Activated T-helper 2 cell treated with anti-CD3 and anti-CD28 coated beads, Interferon-gamma antibody, Interleukin-2, Interleukin-4, amounts not matched to agents 10 μg/mL and 5 μg/mL and 100 μg/mL, durations not matched to agents 14 hours and 24 hours and 36 hours (primary cell): ENCODE measurements at regions of chr3 and their contacts with region 1.

Region 1: GRCh38 chr3:49719214-49719884 is at the start of gene AMIGO3:
- DNase-seq: peak; percentile 90
- H3K4me3 Mint-ChIP-seq: peak within 1 kb of the TSS; percentile 80
- H3K27ac Mint-ChIP-seq: peak within 1 kb of the TSS; percentile 65
- H3K4me1 Mint-ChIP-seq: peaks cover 19% of the 10 kb centered on the region
- H3K27me3 Mint-ChIP-seq: no peaks in the 10 kb centered on the region
- total RNA-seq, gene AMIGO3: not detected in 2 replicates

Region 2: DNA sequence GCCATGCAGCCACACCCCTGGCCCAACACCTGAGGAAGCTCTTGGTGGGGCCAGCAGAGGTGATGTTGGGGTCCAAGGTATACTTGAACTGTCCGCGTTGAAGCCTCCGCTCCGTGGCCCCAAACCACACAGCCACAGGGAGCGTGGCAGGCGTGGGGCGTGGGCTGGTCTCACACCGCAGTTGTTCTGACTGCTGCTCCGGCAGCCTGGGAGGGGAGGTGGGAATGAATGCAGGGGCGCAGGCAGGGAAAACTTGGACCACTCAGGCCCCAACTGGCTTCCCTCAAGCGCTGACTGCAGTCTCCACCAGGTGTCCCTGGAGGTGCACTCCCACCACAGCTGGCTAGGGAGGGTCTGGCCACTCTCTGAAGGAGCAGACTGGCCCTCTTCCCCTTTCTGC is 1303.8 kb before region 1 on chr3:
- intact Hi-C with region 1: no loop called
- DNase-seq: no peak
- H3K4me3 Mint-ChIP-seq: no peak overlapping the region
- H3K27ac Mint-ChIP-seq: no peak overlapping the region
- H3K4me1 Mint-ChIP-seq: no peaks in the 10 kb centered on the region
- H3K27me3 Mint-ChIP-seq: no peaks in the 10 kb centered on the region

Region 3: DNA sequence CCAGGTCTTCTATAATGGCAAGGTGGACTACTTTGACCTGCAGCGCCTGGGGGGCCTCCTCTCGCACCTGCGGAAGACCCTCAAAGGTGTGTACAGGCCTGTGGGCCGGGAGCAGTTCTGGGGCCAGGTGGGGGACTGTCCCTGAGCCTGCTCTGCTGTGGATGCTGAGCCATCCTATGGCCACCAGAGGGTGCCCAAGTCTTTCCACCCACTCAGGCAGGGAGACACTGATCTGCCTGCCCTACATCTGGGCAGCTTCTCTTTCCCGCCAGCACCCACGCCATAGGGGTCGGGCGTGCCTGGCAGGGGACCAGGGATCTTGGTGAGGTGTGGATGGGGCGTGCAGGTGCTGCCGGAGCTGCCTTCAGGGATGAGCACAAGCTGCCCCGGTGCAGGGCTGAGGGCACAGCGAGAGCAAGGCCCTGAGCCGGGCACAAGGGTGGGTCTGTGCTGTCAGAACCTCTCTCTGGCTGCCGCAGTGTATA is 15.9 kb before region 1 on chr3:
- intact Hi-C with region 1: loop called (anchors 2 kb)
- DNase-seq: peak; percentile 56
- H3K4me3 Mint-ChIP-seq: no peak overlapping the region
- H3K27ac Mint-ChIP-seq: no peak overlapping the region
- H3K4me1 Mint-ChIP-seq: no peaks in the 10 kb centered on the region
- H3K27me3 Mint-ChIP-seq: no peaks in the 10 kb centered on the region